ENCODE measurements at regions of chr1 and their contacts with region 1.

Region 1: DNA sequence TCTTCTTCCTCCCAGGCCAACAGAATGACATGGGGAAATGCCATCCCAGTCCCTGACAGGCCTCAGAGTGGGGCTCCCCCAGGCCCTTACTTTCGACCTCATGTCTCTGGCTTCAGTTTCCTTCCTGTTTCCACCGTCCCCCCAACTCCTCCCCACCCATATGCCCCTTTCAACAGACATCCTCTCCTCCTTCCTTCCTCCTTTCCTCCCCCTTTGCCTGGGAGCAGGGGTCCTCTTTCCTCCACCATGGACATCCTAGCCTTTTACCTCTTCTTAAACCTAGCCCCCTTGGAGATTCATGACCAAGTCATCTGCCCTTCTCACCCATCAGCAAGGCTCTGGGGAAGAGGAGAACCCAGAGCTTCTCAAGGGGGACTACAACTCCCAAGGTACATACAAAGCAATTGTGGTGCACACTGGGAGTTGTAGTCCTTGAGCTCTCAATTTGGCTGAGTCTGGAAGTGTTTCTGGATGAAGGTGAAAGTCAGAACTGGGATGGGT is 4.0 kb downstream of the ZBTB7B start:
- DNase-seq: peak in 6 of 35 experiments; percentile 40 to 72 (median 46)
- ATAC-seq: peak; percentile 18 to 53 (median 24)
- H3K4me3 ChIP-seq: no peak overlapping the region
- H3K4me3 Mint-ChIP-seq: peak overlapping the region; percentile 17 to 89 (median 35)
- H3K27ac ChIP-seq: peak overlapping the region; percentile 78
- H3K27ac Mint-ChIP-seq: peak overlapping the region; percentile 94 to 97
- H3K4me1 ChIP-seq: peaks cover 29 to 91% of the 10 kb centered on the region in 2 experiments
- H3K4me1 Mint-ChIP-seq: peaks cover 64 to 73% (median 68%) of the 10 kb centered on the region in 3 donors
- H3K27me3 ChIP-seq: no peaks in the 10 kb centered on the region
- H3K27me3 Mint-ChIP-seq: no peaks in the 10 kb centered on the region

Region 2: GRCh38 chr1:154974063-154974807 is 32.4 kb before region 1 on chr1 and contains the start of gene CKS1B:
- CTCF ChIA-PET with region 1: interaction called in 1 of 2 experiments, 4 read pairs
- POLR2A ChIA-PET with region 1: interaction called in 1 of 2 experiments, 13 read pairs
- DNase-seq: peak; percentile 92 to 99 (median 96)
- ATAC-seq: peak; percentile 85 to 90 (median 88)
- H3K4me3 ChIP-seq: peak within 1 kb of the TSS; percentile 73 to 89
- H3K4me3 Mint-ChIP-seq: no peak within 1 kb of the TSS
- H3K27ac ChIP-seq: peak within 1 kb of the TSS; percentile 90
- H3K27ac Mint-ChIP-seq: no peak within 1 kb of the TSS
- H3K4me1 ChIP-seq: peaks cover 8 to 51% of the 10 kb centered on the region in 2 experiments
- H3K4me1 Mint-ChIP-seq: peaks cover 17 to 35% (median 18%) of the 10 kb centered on the region in 3 donors
- H3K27me3 ChIP-seq: no peaks in the 10 kb centered on the region
- H3K27me3 Mint-ChIP-seq: no peaks in the 10 kb centered on the region
- total RNA-seq, gene CKS1B: 7.9 to 11.8 (median 10.3) TPM

Region 3: GRCh38 chr1:155040341-155041093 is 33.9 kb after region 1 on chr1:
- CTCF ChIA-PET with region 1: interaction called in 1 of 2 experiments, 10 read pairs
- POLR2A ChIA-PET with region 1: no interaction called
- DNase-seq: no peak
- ATAC-seq: no peak
- H3K4me3 ChIP-seq: no peak overlapping the region
- H3K4me3 Mint-ChIP-seq: no peak overlapping the region
- H3K27ac ChIP-seq: no peak overlapping the region
- H3K27ac Mint-ChIP-seq: no peak overlapping the region
- H3K4me1 ChIP-seq: no peaks in the 10 kb centered on the region
- H3K4me1 Mint-ChIP-seq: peaks cover 6 to 12% (median 9%) of the 10 kb centered on the region in 3 donors
- H3K27me3 ChIP-seq: peaks cover 0 to 21% of the 10 kb centered on the region in 2 experiments
- H3K27me3 Mint-ChIP-seq: peaks cover 0 to 3% of the 10 kb centered on the region in 2 donors